PC-3 (cell line): ENCODE measurements at regions of chr11 and their contacts with region 1.

Region 1: GRCh38 chr11:107385361-107385982 is 72.2 kb downstream of the CWF19L2 start:
- DNase-seq: peak; percentile 95
- ATAC-seq: peak; percentile 86
- H3K4me3 ChIP-seq: no peak overlapping the region
- H3K27ac ChIP-seq: peak overlapping the region; percentile 29
- H3K4me1 ChIP-seq: peaks cover 48% of the 10 kb centered on the region
- H3K27me3 ChIP-seq: no peaks in the 10 kb centered on the region
- CTCF ChIP-seq: no peak

Region 2: GRCh38 chr11:107370390-107370789 is 15.1 kb before region 1 on chr11:
- CTCF ChIA-PET with region 1: no interaction called
- POLR2A ChIA-PET with region 1: no interaction called
- intact Hi-C with region 1: no loop called
- DNase-seq: peak; percentile 26
- ATAC-seq: peak; percentile 49
- H3K4me3 ChIP-seq: no peak overlapping the region
- H3K27ac ChIP-seq: no peak overlapping the region
- H3K4me1 ChIP-seq: peaks cover 9% of the 10 kb centered on the region
- H3K27me3 ChIP-seq: no peaks in the 10 kb centered on the region
- CTCF ChIP-seq: no peak

Region 3: GRCh38 chr11:107526197-107526596 is 140.7 kb after region 1 on chr11:
- CTCF ChIA-PET with region 1: no interaction called
- POLR2A ChIA-PET with region 1: no interaction called
- intact Hi-C with region 1: loop called (anchors 10 kb)
- DNase-seq: peak; percentile 50
- ATAC-seq: peak; percentile 76
- H3K4me3 ChIP-seq: no peak overlapping the region
- H3K27ac ChIP-seq: no peak overlapping the region
- H3K4me1 ChIP-seq: peaks cover 13% of the 10 kb centered on the region
- H3K27me3 ChIP-seq: no peaks in the 10 kb centered on the region
- CTCF ChIP-seq: no peak